ENCODE measurements at regions of chr2 and their contacts with region 1.

Region 1: GRCh38 chr2:212548450-212548819 is 9.8 kb upstream of the ERBB4 start:
- DNase-seq: no peak
- ATAC-seq: peak; percentile 69 to 84
- H3K4me3 ChIP-seq: no peak overlapping the region
- H3K27ac ChIP-seq: no peak overlapping the region
- H3K4me1 ChIP-seq: no peaks in the 10 kb centered on the region
- H3K27me3 ChIP-seq: no peaks in the 10 kb centered on the region

Region 2: DNA sequence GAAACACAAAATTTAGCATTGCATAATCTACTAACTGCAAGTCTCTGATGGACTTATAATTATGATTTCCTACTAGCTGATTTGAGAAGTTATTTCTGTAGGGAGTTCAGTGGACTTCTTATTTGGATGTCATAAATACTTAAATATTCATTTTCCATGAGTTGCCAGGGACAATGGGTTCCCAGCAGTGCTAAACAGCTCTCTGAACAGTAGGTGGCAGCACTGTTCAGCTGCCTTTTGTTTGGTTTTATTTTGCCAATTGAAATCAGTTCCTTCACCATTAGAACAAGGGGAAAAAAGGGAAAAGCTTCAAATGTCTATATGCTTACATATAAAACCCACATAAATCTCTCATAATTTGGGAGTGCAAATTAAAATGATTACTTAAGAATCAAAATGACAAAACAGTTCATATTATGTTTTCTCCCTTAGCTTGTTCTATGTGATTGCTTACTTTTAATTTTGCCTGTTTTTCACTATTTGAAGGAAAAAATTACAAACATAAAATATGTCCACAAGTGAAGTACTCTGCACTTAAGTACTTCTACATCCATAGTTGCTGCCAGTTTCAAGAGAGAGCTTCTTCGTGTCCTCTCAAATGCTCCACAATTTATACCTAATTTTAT is 1093.1 kb before region 1 on chr2:
- intact Hi-C with region 1: loop called in 1 of 4 experiments (anchors 10 kb)
- DNase-seq: peak in 1 of 3 donors; percentile 15
- ATAC-seq: peak; percentile 16 to 43
- H3K4me3 ChIP-seq: no peak overlapping the region
- H3K27ac ChIP-seq: no peak overlapping the region
- H3K4me1 ChIP-seq: no peaks in the 10 kb centered on the region
- H3K27me3 ChIP-seq: no peaks in the 10 kb centered on the region

Region 3: DNA sequence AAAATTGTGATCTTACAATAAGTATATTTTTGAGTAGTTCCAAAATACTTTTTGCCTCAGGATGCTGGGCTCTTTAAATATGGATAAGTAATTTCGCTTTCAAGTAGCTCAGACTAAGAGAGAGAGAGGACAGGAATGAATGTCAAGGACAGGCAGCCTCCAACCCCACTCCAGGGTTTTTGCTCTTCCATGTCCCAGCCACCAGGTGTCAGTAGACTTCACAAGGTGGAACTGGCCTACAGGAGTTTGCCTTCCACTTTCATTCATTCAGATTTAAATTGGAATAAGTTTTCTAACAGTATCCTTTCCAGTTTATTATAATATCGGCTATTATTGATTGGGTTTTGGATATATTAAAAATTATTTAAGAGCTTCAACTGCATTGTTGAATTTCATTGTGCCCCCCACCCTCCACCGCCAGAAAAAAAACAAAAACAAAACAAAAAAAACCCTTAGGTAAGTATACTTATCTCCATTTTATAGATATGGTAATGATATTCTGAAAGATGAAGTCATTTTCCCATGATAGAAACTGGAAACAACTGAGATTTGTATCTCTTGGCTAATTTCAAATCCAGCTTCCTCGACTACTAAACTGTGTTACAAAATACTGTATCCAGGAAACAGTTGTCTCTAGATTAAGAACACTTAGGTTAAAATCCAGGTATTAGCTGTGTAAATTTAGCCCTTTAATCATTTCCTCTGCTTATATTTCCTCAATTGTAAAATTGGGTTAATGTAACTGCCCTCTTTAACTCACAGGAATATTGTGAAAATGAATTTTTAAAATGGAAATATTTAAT is 802.9 kb before region 1 on chr2:
- intact Hi-C with region 1: loop called in 2 of 4 experiments (anchors 10 kb)
- DNase-seq: peak in 2 of 3 donors; percentile 22 to 34
- ATAC-seq: peak; percentile 77 to 82
- H3K4me3 ChIP-seq: no peak overlapping the region
- H3K27ac ChIP-seq: no peak overlapping the region
- H3K4me1 ChIP-seq: no peaks in the 10 kb centered on the region
- H3K27me3 ChIP-seq: no peaks in the 10 kb centered on the region

Region 4: GRCh38 chr2:212428681-212429478 is 119.6 kb before region 1 on chr2:
- intact Hi-C with region 1: no loop called
- DNase-seq: no peak
- ATAC-seq: peak in 1 of 2 donors; percentile 24
- H3K4me3 ChIP-seq: no peak overlapping the region
- H3K27ac ChIP-seq: no peak overlapping the region
- H3K4me1 ChIP-seq: peaks cover 1% of the 10 kb centered on the region
- H3K27me3 ChIP-seq: no peaks in the 10 kb centered on the region

Region 5: GRCh38 chr2:212489719-212490346 is 58.6 kb before region 1 on chr2:
- intact Hi-C with region 1: no loop called
- DNase-seq: no peak
- ATAC-seq: no peak
- H3K4me3 ChIP-seq: no peak overlapping the region
- H3K27ac ChIP-seq: no peak overlapping the region
- H3K4me1 ChIP-seq: no peaks in the 10 kb centered on the region
- H3K27me3 ChIP-seq: no peaks in the 10 kb centered on the region

Measured in right cardiac atrium (tissue), 5 donors.